ENCODE measurements at regions of chrX and their contacts with region 1.

Region 1: GRCh38 chrX:40097497-40098263 is at the start of gene BCOR:
- DNase-seq: peak; percentile 71
- H3K4me3 ChIP-seq: peak within 1 kb of the TSS; percentile 60 to 81
- H3K27ac ChIP-seq: peak within 1 kb of the TSS; percentile 63 to 78
- H3K4me1 ChIP-seq: peaks cover 8% of the 10 kb centered on the region
- H3K27me3 ChIP-seq: no peaks in the 10 kb centered on the region
- CTCF ChIP-seq: no peak
- POLR2A ChIP-seq: no peak
- total RNA-seq, gene BCOR: 46.8 to 69.6 TPM

Region 2: GRCh38 chrX:40013266-40014195 is 84.1 kb before region 1 on chrX:
- intact Hi-C with region 1: loop called (anchors 10 kb)
- DNase-seq: peak; percentile 49
- H3K4me3 ChIP-seq: peak overlapping the region; percentile 45 to 53
- H3K27ac ChIP-seq: peak overlapping the region; percentile 59 to 82
- H3K4me1 ChIP-seq: no peaks in the 10 kb centered on the region
- H3K27me3 ChIP-seq: no peaks in the 10 kb centered on the region
- CTCF ChIP-seq: no peak
- POLR2A ChIP-seq: no peak